ENCODE measurements at regions of chr1 and their contacts with region 1.

Region 1: GRCh38 chr1:204565617-204566582 is 49.7 kb downstream of the MDM4 start:
- DNase-seq: peak; percentile 63
- ATAC-seq: peak; percentile 85
- H3K4me3 ChIP-seq: no peak overlapping the region
- H3K27ac ChIP-seq: no peak overlapping the region
- H3K4me1 ChIP-seq: no peaks in the 10 kb centered on the region
- H3K27me3 ChIP-seq: no peaks in the 10 kb centered on the region
- CTCF ChIP-seq: peak; percentile 75
- EP300 ChIP-seq: no peak
- POLR2A ChIP-seq: no peak
- RAD21 ChIP-seq: peak; percentile 64; the same call in 1 of the 2 replicates

Region 2: DNA sequence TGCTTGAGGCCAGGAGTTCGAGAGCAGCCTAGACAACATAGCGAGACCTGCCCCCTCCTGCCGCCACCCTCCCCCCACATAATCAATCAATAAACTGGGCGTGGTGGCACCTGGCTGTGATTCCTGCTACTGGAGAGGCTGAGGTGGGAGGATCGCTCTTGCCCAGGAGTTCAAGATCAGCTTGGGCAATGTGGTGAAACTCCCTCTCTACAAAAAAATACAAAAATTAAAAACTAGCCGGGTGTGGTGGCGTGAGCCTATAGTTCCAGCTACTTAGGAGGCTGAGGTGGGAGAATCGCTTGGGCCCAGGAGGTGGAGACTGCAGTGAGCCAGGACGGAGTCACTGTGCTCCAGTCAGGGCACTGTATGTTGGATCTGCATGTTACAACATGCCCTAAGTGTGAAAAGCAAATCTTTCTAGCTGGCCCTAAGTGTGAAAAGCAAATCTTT is 56.7 kb before region 1 on chr1:
- CTCF ChIA-PET with region 1: no interaction called
- POLR2A ChIA-PET with region 1: no interaction called
- in situ Hi-C with region 1: no loop called
- intact Hi-C with region 1: no loop called
- DNase-seq: peak; percentile 38
- ATAC-seq: peak; percentile 37
- H3K4me3 ChIP-seq: peak overlapping the region; percentile 18 to 76 (median 22); a peak in 5 of 6 replicates
- H3K27ac ChIP-seq: no peak overlapping the region
- H3K4me1 ChIP-seq: peaks cover 37% of the 10 kb centered on the region
- H3K27me3 ChIP-seq: no peaks in the 10 kb centered on the region; a peak in 1 of 5 replicates
- CTCF ChIP-seq: no peak
- EP300 ChIP-seq: no peak
- POLR2A ChIP-seq: no peak
- RAD21 ChIP-seq: no peak

Region 3: GRCh38 chr1:204763706-204764427 is 198.0 kb after region 1 on chr1:
- CTCF ChIA-PET with region 1: interaction called, 27 read pairs
- POLR2A ChIA-PET with region 1: no interaction called
- in situ Hi-C with region 1: loop called (anchors 5 kb)
- intact Hi-C with region 1: loop called (anchors 1 kb)
- DNase-seq: peak; percentile 35
- ATAC-seq: peak; percentile 98
- H3K4me3 ChIP-seq: no peak overlapping the region
- H3K27ac ChIP-seq: no peak overlapping the region
- H3K4me1 ChIP-seq: no peaks in the 10 kb centered on the region
- H3K27me3 ChIP-seq: peaks cover 0 to 4% of the 10 kb centered on the region in 2 experiments; a peak in 1 of 5 replicates
- CTCF ChIP-seq: peak; percentile 87
- EP300 ChIP-seq: no peak
- POLR2A ChIP-seq: no peak
- RAD21 ChIP-seq: peak; percentile 78; the same call in 1 of the 2 replicates

Region 4: GRCh38 chr1:204806943-204807687 is 241.2 kb after region 1 on chr1:
- CTCF ChIA-PET with region 1: interaction called, 41 read pairs
- POLR2A ChIA-PET with region 1: no interaction called
- in situ Hi-C with region 1: loop called (anchors 10 kb)
- intact Hi-C with region 1: loop called (anchors 1 kb)
- DNase-seq: peak; percentile 70
- ATAC-seq: peak; percentile 97
- H3K4me3 ChIP-seq: peak overlapping the region; percentile 18 to 72 (median 57); a peak in 5 of 6 replicates
- H3K27ac ChIP-seq: no peak overlapping the region
- H3K4me1 ChIP-seq: peaks cover 20% of the 10 kb centered on the region
- H3K27me3 ChIP-seq: no peaks in the 10 kb centered on the region
- CTCF ChIP-seq: peak; percentile 89
- EP300 ChIP-seq: no peak
- POLR2A ChIP-seq: no peak
- RAD21 ChIP-seq: peak; percentile 86

Region 5: GRCh38 chr1:204853436-204853835 is 287.5 kb after region 1 on chr1:
- CTCF ChIA-PET with region 1: no interaction called
- POLR2A ChIA-PET with region 1: no interaction called
- in situ Hi-C with region 1: no loop called
- intact Hi-C with region 1: no loop called
- DNase-seq: no peak
- ATAC-seq: no peak
- H3K4me3 ChIP-seq: no peak overlapping the region
- H3K27ac ChIP-seq: no peak overlapping the region
- H3K4me1 ChIP-seq: no peaks in the 10 kb centered on the region
- H3K27me3 ChIP-seq: no peaks in the 10 kb centered on the region
- CTCF ChIP-seq: no peak
- EP300 ChIP-seq: no peak
- POLR2A ChIP-seq: no peak
- RAD21 ChIP-seq: no peak